Prostate gland (tissue), 2 donors: ENCODE measurements at regions of chr9 and their contacts with region 1.

Region 1: DNA sequence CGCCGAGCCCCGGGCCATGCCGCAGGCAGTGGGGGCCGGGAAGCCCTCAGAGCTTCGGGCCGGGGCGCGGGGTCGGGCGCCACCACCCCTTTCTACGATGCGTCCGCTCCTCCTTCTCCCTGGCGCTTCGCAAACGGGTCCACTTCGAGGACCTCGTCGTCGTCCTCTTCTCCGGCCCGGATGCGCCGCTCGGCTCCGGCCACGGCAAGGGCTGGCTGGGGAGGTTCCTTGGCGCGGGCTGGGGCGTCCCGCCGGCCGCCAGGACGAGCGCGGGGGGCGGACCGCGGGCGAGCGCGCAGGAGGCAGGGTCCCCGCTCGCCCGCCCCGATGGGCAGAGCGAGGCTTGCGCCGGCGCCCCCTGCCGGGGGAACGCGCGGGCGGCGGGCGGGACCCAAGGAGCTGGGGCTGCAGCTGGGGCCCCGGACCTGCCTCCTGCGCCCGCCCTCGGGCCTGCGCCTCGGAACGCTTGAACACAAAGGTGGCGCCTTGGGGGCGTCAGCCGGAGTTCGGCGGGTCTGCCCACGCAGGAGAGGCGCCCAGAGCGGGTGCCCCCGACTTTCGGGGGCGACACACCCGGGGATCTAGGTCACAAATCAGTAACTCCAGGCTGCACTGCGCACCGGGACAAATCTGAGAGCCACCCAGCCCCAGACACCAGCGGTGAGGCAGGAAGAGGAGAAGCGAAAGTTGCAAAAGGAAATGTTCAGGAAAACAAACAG is at the start of gene ROR2:
- DNase-seq: peak; percentile 87
- H3K4me3 ChIP-seq: peak within 1 kb of the TSS; percentile 69 to 83
- H3K27ac ChIP-seq: peak within 1 kb of the TSS; percentile 95 to 96
- H3K4me1 ChIP-seq: peaks cover 6% of the 10 kb centered on the region
- H3K27me3 ChIP-seq: no peaks in the 10 kb centered on the region
- CTCF ChIP-seq: peak; percentile 79 to 97 (median 90)
- POLR2A ChIP-seq: peak; percentile 48
- total RNA-seq, gene ROR2: 37.2 to 43.9 TPM

Region 2: GRCh38 chr9:91758491-91758981 is 191.6 kb before region 1 on chr9:
- intact Hi-C with region 1: loop called (anchors 5 kb)
- DNase-seq: peak; percentile 19
- H3K4me3 ChIP-seq: no peak overlapping the region
- H3K27ac ChIP-seq: no peak overlapping the region
- H3K4me1 ChIP-seq: no peaks in the 10 kb centered on the region
- H3K27me3 ChIP-seq: no peaks in the 10 kb centered on the region
- CTCF ChIP-seq: peak in 3 of 4 experiments; percentile 46 to 59 (median 47)
- POLR2A ChIP-seq: no peak

Region 3: GRCh38 chr9:91775011-91775707 is 174.9 kb before region 1 on chr9:
- intact Hi-C with region 1: loop called (anchors 2 kb)
- DNase-seq: peak; percentile 66
- H3K4me3 ChIP-seq: no peak overlapping the region
- H3K27ac ChIP-seq: no peak overlapping the region
- H3K4me1 ChIP-seq: peaks cover 6% of the 10 kb centered on the region
- H3K27me3 ChIP-seq: no peaks in the 10 kb centered on the region
- CTCF ChIP-seq: peak; percentile 68 to 90 (median 87)
- POLR2A ChIP-seq: no peak

Region 4: DNA sequence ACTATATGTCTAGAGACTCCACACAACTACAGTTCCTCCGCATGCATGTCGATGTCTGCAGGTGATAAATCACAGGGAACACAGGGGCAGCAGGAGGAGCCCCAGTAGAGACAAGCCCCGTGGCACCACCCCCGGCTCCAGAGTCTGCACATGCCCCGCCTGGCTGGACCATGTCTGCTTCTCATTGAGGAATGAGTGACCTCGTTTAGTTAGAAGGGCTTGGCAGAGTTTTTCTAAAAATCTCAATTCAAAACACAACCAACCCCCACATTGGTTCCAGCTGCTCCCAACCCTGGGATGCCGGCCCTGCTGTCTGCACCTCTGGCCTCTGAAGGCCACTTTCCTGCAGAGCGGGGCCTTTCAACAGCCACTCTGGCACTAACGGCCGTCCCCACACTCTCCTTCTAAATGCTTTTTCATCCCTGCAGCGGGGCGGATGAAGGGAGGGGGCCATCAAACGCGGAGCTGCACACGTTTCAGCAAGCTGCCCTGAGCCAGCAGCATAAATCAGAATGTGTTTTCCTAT is 106.4 kb before region 1 on chr9:
- intact Hi-C with region 1: loop called (anchors 5 kb)
- DNase-seq: no peak
- H3K4me3 ChIP-seq: no peak overlapping the region
- H3K27ac ChIP-seq: peak overlapping the region; percentile 49 to 51
- H3K4me1 ChIP-seq: peaks cover 12% of the 10 kb centered on the region
- H3K27me3 ChIP-seq: no peaks in the 10 kb centered on the region
- CTCF ChIP-seq: no peak
- POLR2A ChIP-seq: no peak

Region 5: GRCh38 chr9:91898451-91899218 is 51.5 kb before region 1 on chr9:
- intact Hi-C with region 1: loop called (anchors 2 kb)
- DNase-seq: peak; percentile 93
- H3K4me3 ChIP-seq: no peak overlapping the region
- H3K27ac ChIP-seq: peak overlapping the region; percentile 79 to 91
- H3K4me1 ChIP-seq: peaks cover 61% of the 10 kb centered on the region
- H3K27me3 ChIP-seq: no peaks in the 10 kb centered on the region
- CTCF ChIP-seq: peak in 1 of 4 experiments; percentile 39
- POLR2A ChIP-seq: peak; percentile 60

Region 6: GRCh38 chr9:92115071-92115858 is 165.2 kb after region 1 on chr9 and contains the start of gene SPTLC1:
- intact Hi-C with region 1: loop called (anchors 5 kb)
- DNase-seq: peak; percentile 94
- H3K4me3 ChIP-seq: peak within 1 kb of the TSS; percentile 68 to 80
- H3K27ac ChIP-seq: peak within 1 kb of the TSS; percentile 75 to 82
- H3K4me1 ChIP-seq: peaks cover 2% of the 10 kb centered on the region
- H3K27me3 ChIP-seq: no peaks in the 10 kb centered on the region
- CTCF ChIP-seq: peak in 2 of 4 experiments; percentile 23 to 39
- POLR2A ChIP-seq: peak; percentile 88
- total RNA-seq, gene SPTLC1: 69.5 to 87.2 TPM

Region 7: GRCh38 chr9:92276331-92277032 is 326.4 kb after region 1 on chr9:
- intact Hi-C with region 1: no loop called
- DNase-seq: no peak
- H3K4me3 ChIP-seq: no peak overlapping the region
- H3K27ac ChIP-seq: no peak overlapping the region
- H3K4me1 ChIP-seq: no peaks in the 10 kb centered on the region
- H3K27me3 ChIP-seq: no peaks in the 10 kb centered on the region
- CTCF ChIP-seq: no peak
- POLR2A ChIP-seq: no peak